ENCODE measurements at regions of chr3 and their contacts with region 1.

Region 1: DNA sequence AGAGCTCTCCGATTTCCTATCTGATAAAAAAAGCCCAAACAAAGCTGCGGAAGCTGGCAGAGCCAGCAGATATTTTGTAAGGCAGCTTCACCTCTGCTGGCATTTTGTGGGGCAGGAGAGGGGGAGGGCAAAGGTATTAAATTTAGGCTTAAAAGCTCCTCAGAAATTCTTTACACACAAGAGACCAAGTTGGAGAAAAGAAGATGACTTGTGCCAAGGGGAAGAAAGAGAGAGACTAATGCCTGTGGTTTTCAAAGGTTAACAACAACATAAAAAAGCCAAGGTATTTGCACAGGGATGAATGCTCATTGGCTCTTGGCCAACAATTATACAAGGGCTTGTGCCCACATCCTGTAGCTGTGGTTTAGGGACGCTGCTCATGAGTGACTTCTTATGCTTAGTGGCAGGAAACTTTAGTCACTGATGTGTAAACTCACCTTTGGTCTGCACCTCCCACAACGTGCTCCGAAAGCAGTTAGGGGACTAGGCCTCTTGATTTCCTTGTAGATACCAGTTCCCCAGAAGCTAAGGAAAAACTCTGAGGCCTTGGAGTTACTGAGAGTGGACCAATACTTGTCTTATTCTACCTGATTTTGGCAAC is 152.9 kb downstream of the TPRG1 start:
- DNase-seq: peak; percentile 48 to 97 (median 71)
- ATAC-seq: peak; percentile 96
- H3K4me3 ChIP-seq: no peak overlapping the region
- H3K4me3 Mint-ChIP-seq: peak overlapping the region; percentile 86
- H3K27ac ChIP-seq: peak overlapping the region; percentile 26 to 33
- H3K27ac Mint-ChIP-seq: peak overlapping the region; percentile 92
- H3K4me1 ChIP-seq: peaks cover 34% of the 10 kb centered on the region
- H3K4me1 Mint-ChIP-seq: peaks cover 75% of the 10 kb centered on the region
- H3K27me3 ChIP-seq: no peaks in the 10 kb centered on the region
- H3K27me3 Mint-ChIP-seq: no peaks in the 10 kb centered on the region
- CTCF ChIP-seq: no peak

Region 2: GRCh38 chr3:189132231-189132707 is 192.4 kb before region 1 on chr3:
- CTCF ChIA-PET with region 1: no interaction called
- POLR2A ChIA-PET with region 1: no interaction called
- intact Hi-C with region 1: loop called (anchors 2 to 10 kb)
- DNase-seq: peak; percentile 36 to 93 (median 72)
- ATAC-seq: peak; percentile 96
- H3K4me3 ChIP-seq: peak overlapping the region; percentile 10
- H3K4me3 Mint-ChIP-seq: peak overlapping the region; percentile 56
- H3K27ac ChIP-seq: peak overlapping the region; percentile 30 to 74
- H3K27ac Mint-ChIP-seq: peak overlapping the region; percentile 97
- H3K4me1 ChIP-seq: peaks cover 27% of the 10 kb centered on the region
- H3K4me1 Mint-ChIP-seq: peaks cover 23% of the 10 kb centered on the region
- H3K27me3 ChIP-seq: no peaks in the 10 kb centered on the region
- H3K27me3 Mint-ChIP-seq: no peaks in the 10 kb centered on the region
- CTCF ChIP-seq: no peak

Region 3: DNA sequence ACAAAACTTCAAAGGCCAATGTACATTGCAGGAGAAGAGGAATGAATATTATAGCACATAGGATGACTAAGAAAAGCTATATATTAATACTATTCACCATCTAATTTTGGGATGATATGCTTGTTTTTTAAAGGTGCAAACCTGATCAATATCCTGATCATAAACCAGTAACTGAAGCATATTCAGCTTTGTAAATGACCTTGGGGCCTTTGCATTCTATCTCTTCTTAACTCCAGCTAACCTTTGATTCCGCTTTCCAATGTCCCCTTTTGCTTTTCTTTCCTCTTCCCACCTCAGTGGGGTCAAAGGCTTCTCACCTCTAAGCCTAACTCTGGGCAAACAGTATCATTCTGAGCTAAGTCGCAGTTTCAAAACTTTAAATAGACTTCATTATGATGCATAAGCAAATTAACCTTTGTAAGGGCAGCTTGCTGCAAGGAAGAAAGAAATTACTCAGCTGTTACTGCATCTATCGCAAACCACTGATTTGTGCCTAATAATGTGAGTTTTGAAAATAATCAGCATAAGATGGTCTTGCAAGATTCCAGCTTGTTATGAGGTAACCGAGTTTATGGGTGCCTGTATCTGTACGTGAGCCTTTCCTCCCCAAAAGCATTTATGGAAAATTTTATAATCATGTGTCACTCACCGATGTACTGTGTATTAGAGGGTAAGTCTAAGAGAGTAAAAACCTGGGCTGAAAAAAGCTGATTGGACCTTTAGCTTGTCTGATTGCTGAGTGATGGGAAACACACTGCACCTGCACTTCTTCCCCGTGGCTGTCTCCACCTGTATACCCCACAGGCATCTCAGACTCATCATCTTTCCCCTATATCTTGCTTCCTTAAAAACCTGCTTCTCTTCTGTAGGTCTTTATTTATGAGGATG is 36.0 kb before region 1 on chr3:
- CTCF ChIA-PET with region 1: no interaction called
- POLR2A ChIA-PET with region 1: interaction called, 12 read pairs
- intact Hi-C with region 1: loop called in 1 of 2 experiments (anchors 2 kb)
- DNase-seq: no peak
- ATAC-seq: no peak
- H3K4me3 ChIP-seq: no peak overlapping the region
- H3K4me3 Mint-ChIP-seq: no peak overlapping the region
- H3K27ac ChIP-seq: no peak overlapping the region
- H3K27ac Mint-ChIP-seq: no peak overlapping the region
- H3K4me1 ChIP-seq: peaks cover 12% of the 10 kb centered on the region
- H3K4me1 Mint-ChIP-seq: peaks cover 42% of the 10 kb centered on the region
- H3K27me3 ChIP-seq: no peaks in the 10 kb centered on the region
- H3K27me3 Mint-ChIP-seq: no peaks in the 10 kb centered on the region
- CTCF ChIP-seq: no peak

Region 4: GRCh38 chr3:189304446-189305351 is 19.9 kb before region 1 on chr3:
- CTCF ChIA-PET with region 1: interaction called, 5 read pairs
- POLR2A ChIA-PET with region 1: interaction called, 18 read pairs
- intact Hi-C with region 1: loop called in 1 of 2 experiments (anchors 2 kb)
- DNase-seq: peak in 2 of 14 experiments; percentile 8 to 39
- ATAC-seq: peak; percentile 69
- H3K4me3 ChIP-seq: no peak overlapping the region
- H3K4me3 Mint-ChIP-seq: no peak overlapping the region
- H3K27ac ChIP-seq: no peak overlapping the region
- H3K27ac Mint-ChIP-seq: peak overlapping the region; percentile 65
- H3K4me1 ChIP-seq: peaks cover 8% of the 10 kb centered on the region
- H3K4me1 Mint-ChIP-seq: peaks cover 64% of the 10 kb centered on the region
- H3K27me3 ChIP-seq: no peaks in the 10 kb centered on the region
- H3K27me3 Mint-ChIP-seq: no peaks in the 10 kb centered on the region
- CTCF ChIP-seq: no peak

Region 5: DNA sequence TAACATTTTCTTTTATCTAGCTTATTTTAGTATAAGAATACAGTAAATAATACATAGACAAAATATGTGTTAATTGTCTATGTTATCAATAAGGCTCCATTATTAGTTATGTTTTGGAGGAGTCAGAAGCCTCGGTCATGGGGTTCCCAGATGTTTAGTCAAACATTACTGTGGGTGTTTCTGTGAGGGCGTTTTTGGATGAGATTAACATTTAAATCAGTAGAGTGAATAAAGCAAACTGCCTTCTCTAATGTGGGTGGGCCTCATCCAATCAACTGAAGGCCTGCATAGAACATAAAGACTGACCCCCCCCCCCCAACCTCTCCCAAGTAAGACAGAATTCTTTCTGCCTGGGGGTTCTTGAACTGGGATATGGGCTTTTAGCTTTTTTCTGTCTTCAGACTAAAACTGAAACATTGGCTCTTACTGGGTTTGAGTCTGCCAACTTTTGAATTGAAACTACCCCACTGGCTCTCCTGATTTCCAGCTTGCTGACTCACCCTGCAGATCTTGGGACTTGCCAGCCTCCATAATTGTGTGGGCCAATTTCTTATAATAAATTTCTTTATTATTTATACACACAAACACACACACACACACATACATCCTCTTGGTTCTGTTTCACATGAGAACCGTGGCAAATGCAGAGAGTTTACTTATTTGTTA is 39.1 kb after region 1 on chr3:
- CTCF ChIA-PET with region 1: interaction called, 3 read pairs
- POLR2A ChIA-PET with region 1: no interaction called
- intact Hi-C with region 1: loop called in 1 of 2 experiments (anchors 5 kb)
- DNase-seq: no peak
- ATAC-seq: no peak
- H3K4me3 ChIP-seq: no peak overlapping the region
- H3K4me3 Mint-ChIP-seq: no peak overlapping the region
- H3K27ac ChIP-seq: no peak overlapping the region
- H3K27ac Mint-ChIP-seq: no peak overlapping the region
- H3K4me1 ChIP-seq: no peaks in the 10 kb centered on the region
- H3K4me1 Mint-ChIP-seq: peaks cover 6% of the 10 kb centered on the region
- H3K27me3 ChIP-seq: no peaks in the 10 kb centered on the region
- H3K27me3 Mint-ChIP-seq: no peaks in the 10 kb centered on the region
- CTCF ChIP-seq: no peak

Region 6: DNA sequence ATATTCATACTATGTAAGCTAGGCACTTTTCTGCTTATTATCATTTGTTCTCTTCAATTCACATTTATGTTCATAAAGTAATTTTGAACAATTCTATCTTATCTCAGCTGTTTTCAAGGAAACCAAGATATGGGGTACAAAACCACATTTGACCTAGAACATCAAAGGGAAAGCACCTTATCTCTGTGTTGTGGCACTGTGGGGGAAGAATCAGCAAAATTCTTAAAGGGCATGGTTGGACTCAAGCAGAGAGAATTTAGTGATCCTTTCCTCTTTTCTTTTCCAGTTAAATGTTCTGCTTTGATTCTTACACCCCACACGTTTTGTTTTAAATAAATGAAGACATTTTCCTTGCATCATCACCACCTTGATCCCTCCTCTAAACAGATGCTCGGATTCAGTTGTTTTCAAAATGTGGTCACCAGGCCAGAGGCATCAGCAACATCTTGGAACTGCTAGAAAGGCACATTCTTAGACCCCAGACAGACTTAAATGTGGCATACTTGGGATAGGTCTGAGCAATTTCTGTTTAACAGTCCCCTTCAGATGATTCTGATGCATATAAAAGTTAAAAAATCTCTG is 178.1 kb after region 1 on chr3:
- CTCF ChIA-PET with region 1: no interaction called
- POLR2A ChIA-PET with region 1: no interaction called
- intact Hi-C with region 1: no loop called
- DNase-seq: peak in 1 of 14 experiments; percentile 9
- ATAC-seq: no peak
- H3K4me3 ChIP-seq: no peak overlapping the region
- H3K4me3 Mint-ChIP-seq: no peak overlapping the region
- H3K27ac ChIP-seq: no peak overlapping the region
- H3K27ac Mint-ChIP-seq: no peak overlapping the region
- H3K4me1 ChIP-seq: no peaks in the 10 kb centered on the region
- H3K4me1 Mint-ChIP-seq: peaks cover 30% of the 10 kb centered on the region
- H3K27me3 ChIP-seq: no peaks in the 10 kb centered on the region
- H3K27me3 Mint-ChIP-seq: no peaks in the 10 kb centered on the region
- CTCF ChIP-seq: no peak

Measured in CD4-positive, alpha-beta T cell (primary cell).